ENCODE measurements at regions of chr19 and their contacts with region 1.

Region 1: GRCh38 chr19:53961523-53962356 is 997 bp upstream of the CACNG8 start:
- DNase-seq: no peak
- ATAC-seq: no peak
- H3K4me3 ChIP-seq: no peak overlapping the region
- H3K27ac ChIP-seq: no peak overlapping the region
- H3K4me1 ChIP-seq: peaks cover 0 to 14% (median 0%) of the 10 kb centered on the region in 9 donors
- H3K27me3 ChIP-seq: peaks cover 17 to 96% (median 76%) of the 10 kb centered on the region in 7 donors
- CTCF ChIP-seq: no peak

Region 2: GRCh38 chr19:55540619-55541018 is 1578.9 kb after region 1 on chr19:
- intact Hi-C with region 1: loop called in 1 of 10 experiments (anchors 5 kb)
- DNase-seq: no peak
- ATAC-seq: peak in 1 of 8 donors; percentile 19
- H3K4me3 ChIP-seq: no peak overlapping the region
- H3K27ac ChIP-seq: no peak overlapping the region
- H3K4me1 ChIP-seq: peaks cover 5 to 13% (median 9%) of the 10 kb centered on the region in 9 donors
- H3K27me3 ChIP-seq: no peaks in the 10 kb centered on the region
- CTCF ChIP-seq: no peak

Measured in heart right ventricle (tissue), 16 donors.